ENCODE measurements at regions of chr1 and their contacts with region 1.

Region 1: DNA sequence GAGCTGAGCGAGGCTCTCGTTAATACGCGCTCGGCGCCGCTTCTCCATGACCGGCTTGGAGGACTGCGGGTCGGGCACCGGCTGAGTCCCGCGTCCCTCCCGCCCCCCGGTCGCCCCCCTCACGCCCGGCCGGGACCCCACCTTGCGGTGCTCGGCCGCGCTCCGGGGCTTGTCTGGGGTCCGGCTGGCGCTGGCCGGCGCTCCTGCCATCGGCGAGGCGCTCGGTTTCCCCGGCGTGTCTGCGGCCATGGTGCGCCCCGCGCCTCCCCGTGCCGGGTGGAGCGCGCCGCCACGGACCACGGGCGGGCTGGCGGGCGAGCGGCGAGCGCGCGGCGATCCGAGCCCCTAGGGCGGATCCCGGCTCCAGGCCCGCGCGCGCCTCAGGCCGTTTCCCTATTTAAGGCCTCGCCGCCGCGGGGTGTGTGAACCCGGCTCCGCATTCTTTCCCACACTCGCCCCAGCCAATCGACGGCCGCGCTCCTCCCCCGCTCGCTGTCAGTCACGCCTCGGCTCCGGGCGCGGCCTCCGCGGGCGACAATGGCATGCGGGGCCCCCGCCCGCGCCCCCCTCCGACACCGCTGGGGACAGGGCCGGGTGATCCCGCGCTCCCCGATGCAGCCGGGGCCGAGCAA is at the start of gene HES4:
- DNase-seq: peak in 5 of 9 experiments; percentile 50 to 83 (median 70)
- ATAC-seq: peak; percentile 44
- H3K4me3 ChIP-seq: peak within 1 kb of the TSS; percentile 39 to 50
- H3K4me3 Mint-ChIP-seq: peak within 1 kb of the TSS; percentile 82
- H3K27ac ChIP-seq: peak within 1 kb of the TSS in 1 of 2 experiments; percentile 19
- H3K27ac Mint-ChIP-seq: peak within 1 kb of the TSS; percentile 94
- H3K4me1 ChIP-seq: peaks cover 57% of the 10 kb centered on the region
- H3K4me1 Mint-ChIP-seq: peaks cover 24% of the 10 kb centered on the region
- H3K27me3 ChIP-seq: peaks cover 40 to 62% of the 10 kb centered on the region in 2 experiments
- H3K27me3 Mint-ChIP-seq: peaks cover 30% of the 10 kb centered on the region
- CTCF ChIP-seq: no peak
- total RNA-seq, gene HES4: 26.0 to 30.9 TPM

Region 2: GRCh38 chr1:1019122-1019999 is 19.5 kb after region 1 on chr1:
- CTCF ChIA-PET with region 1: interaction called, 26 read pairs
- POLR2A ChIA-PET with region 1: no interaction called
- intact Hi-C with region 1: loop called (anchors 1 to 2 kb)
- DNase-seq: peak; percentile 62 to 89 (median 81)
- ATAC-seq: peak; percentile 85
- H3K4me3 ChIP-seq: peak overlapping the region; percentile 35 to 39
- H3K4me3 Mint-ChIP-seq: peak overlapping the region; percentile 77
- H3K27ac ChIP-seq: peak overlapping the region in 1 of 2 experiments; percentile 14
- H3K27ac Mint-ChIP-seq: peak overlapping the region; percentile 32
- H3K4me1 ChIP-seq: peaks cover 13% of the 10 kb centered on the region
- H3K4me1 Mint-ChIP-seq: peaks cover 21% of the 10 kb centered on the region
- H3K27me3 ChIP-seq: peaks cover 0 to 6% of the 10 kb centered on the region in 2 experiments
- H3K27me3 Mint-ChIP-seq: no peaks in the 10 kb centered on the region
- CTCF ChIP-seq: no peak

Region 3: GRCh38 chr1:1059494-1060280 is 59.8 kb after region 1 on chr1:
- CTCF ChIA-PET with region 1: interaction called, 9 read pairs
- POLR2A ChIA-PET with region 1: no interaction called
- intact Hi-C with region 1: loop called in 1 of 2 experiments (anchors 5 kb)
- DNase-seq: peak; percentile 86 to 96 (median 90)
- ATAC-seq: peak; percentile 67
- H3K4me3 ChIP-seq: peak overlapping the region; percentile 19 to 66
- H3K4me3 Mint-ChIP-seq: peak overlapping the region; percentile 51
- H3K27ac ChIP-seq: no peak overlapping the region
- H3K27ac Mint-ChIP-seq: no peak overlapping the region
- H3K4me1 ChIP-seq: peaks cover 45% of the 10 kb centered on the region
- H3K4me1 Mint-ChIP-seq: peaks cover 13% of the 10 kb centered on the region
- H3K27me3 ChIP-seq: peaks cover 0 to 38% of the 10 kb centered on the region in 2 experiments
- H3K27me3 Mint-ChIP-seq: peaks cover 17% of the 10 kb centered on the region
- CTCF ChIP-seq: no peak

Measured in CD8-positive, alpha-beta T cell (primary cell).